GM12878 (cell line): ENCODE measurements at regions of chr10 and their contacts with region 1.

Region 1: DNA sequence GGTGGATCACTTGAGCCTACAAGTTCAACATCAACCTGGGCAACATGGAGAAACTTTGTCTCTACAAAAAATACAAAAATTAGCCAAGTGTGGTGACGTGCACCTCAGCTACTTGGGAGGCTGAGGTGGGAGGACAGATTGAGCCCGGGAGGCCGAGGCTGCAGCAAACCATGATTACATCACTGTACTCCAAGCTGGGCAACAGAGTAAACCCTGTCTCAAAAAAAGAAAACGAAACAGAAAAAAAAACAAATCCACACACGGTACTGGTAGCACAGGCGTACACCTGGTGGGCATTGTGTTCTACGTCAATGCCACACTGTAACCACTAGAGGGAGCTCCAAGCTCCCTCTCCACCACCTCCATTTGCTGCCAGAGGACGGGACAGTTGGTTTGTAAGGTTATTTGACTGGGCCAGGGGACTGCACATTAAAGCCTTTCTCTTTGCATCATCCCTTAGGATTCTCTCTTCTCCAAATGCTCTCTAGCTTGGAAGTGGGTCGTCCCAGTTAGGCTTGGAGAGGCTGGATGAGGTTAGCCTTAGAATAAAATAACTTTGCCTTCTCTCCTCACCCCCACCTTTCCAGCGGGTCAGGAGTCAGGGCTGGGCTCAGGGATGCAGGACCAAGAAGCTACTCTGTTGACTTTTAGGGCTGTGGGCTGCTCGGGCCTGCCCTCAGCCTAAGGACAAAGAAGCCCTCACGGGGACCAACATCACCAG is 130.8 kb downstream of the SORBS1 start:
- DNase-seq: peak; percentile 30
- ATAC-seq: peak; percentile 93
- H3K4me3 ChIP-seq: no peak overlapping the region
- H3K27ac ChIP-seq: no peak overlapping the region
- H3K4me1 ChIP-seq: peaks cover 7% of the 10 kb centered on the region
- H3K27me3 ChIP-seq: no peaks in the 10 kb centered on the region; a peak in 1 of 4 replicates
- CTCF ChIP-seq: peak; percentile 93 to 96 (median 93)
- EP300 ChIP-seq: no peak
- POLR2A ChIP-seq: no peak
- RAD21 ChIP-seq: peak; percentile 88

Region 2: DNA sequence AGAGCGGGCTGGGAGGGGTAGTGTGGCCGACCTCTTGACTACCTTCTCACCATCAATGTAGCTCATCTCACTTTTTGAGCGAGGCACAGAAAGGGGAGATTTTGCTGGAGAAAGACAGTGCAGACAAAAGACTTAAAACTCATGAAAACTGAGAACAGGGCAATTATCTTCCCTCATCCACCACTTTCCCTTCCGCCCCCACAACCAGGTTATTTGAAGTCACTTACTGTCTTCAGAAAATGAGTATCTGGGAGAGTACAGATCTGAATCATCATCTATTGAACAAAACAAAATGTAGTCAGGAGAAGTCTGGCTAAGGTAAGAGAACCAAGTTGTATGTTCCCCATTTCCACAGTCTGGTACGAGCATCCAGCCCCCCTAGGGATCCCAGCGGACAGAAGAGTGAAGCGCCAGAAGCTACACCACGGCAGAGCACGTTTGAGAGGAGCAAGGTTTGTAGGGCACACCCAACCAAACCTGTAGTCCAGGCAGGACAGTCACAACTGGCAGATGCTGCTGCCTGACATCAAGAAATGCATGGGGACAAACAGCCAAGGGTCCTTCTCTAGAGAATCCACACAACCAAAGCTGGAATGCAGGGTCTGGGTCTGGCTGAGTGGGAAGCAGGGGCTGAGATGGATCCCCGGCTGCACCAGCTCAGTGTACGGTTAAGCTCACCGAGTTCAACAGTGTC is 46.2 kb before region 1 on chr10:
- CTCF ChIA-PET with region 1: interaction called, 126 read pairs
- POLR2A ChIA-PET with region 1: no interaction called
- RAD21 ChIA-PET with region 1: interaction called, 3 read pairs
- SMC1A ChIA-PET with region 1: interaction called, 81 read pairs
- in situ Hi-C with region 1: no loop called
- intact Hi-C with region 1: no loop called
- DNase-seq: no peak
- ATAC-seq: peak; percentile 45
- H3K4me3 ChIP-seq: no peak overlapping the region
- H3K27ac ChIP-seq: no peak overlapping the region
- H3K4me1 ChIP-seq: peaks cover 20% of the 10 kb centered on the region
- H3K27me3 ChIP-seq: no peaks in the 10 kb centered on the region
- CTCF ChIP-seq: no peak
- EP300 ChIP-seq: no peak
- POLR2A ChIP-seq: no peak
- RAD21 ChIP-seq: no peak

Region 3: GRCh38 chr10:95400787-95401186 is 29.6 kb before region 1 on chr10:
- CTCF ChIA-PET with region 1: interaction called, 25 read pairs
- POLR2A ChIA-PET with region 1: interaction called, 5 read pairs
- RAD21 ChIA-PET with region 1: interaction called, 3 read pairs
- SMC1A ChIA-PET with region 1: interaction called, 6 read pairs
- in situ Hi-C with region 1: no loop called
- intact Hi-C with region 1: no loop called
- DNase-seq: no peak
- ATAC-seq: no peak
- H3K4me3 ChIP-seq: no peak overlapping the region
- H3K27ac ChIP-seq: no peak overlapping the region
- H3K4me1 ChIP-seq: peaks cover 13% of the 10 kb centered on the region
- H3K27me3 ChIP-seq: no peaks in the 10 kb centered on the region; a peak in 1 of 4 replicates
- CTCF ChIP-seq: no peak
- EP300 ChIP-seq: no peak
- POLR2A ChIP-seq: no peak
- RAD21 ChIP-seq: no peak

Region 4: DNA sequence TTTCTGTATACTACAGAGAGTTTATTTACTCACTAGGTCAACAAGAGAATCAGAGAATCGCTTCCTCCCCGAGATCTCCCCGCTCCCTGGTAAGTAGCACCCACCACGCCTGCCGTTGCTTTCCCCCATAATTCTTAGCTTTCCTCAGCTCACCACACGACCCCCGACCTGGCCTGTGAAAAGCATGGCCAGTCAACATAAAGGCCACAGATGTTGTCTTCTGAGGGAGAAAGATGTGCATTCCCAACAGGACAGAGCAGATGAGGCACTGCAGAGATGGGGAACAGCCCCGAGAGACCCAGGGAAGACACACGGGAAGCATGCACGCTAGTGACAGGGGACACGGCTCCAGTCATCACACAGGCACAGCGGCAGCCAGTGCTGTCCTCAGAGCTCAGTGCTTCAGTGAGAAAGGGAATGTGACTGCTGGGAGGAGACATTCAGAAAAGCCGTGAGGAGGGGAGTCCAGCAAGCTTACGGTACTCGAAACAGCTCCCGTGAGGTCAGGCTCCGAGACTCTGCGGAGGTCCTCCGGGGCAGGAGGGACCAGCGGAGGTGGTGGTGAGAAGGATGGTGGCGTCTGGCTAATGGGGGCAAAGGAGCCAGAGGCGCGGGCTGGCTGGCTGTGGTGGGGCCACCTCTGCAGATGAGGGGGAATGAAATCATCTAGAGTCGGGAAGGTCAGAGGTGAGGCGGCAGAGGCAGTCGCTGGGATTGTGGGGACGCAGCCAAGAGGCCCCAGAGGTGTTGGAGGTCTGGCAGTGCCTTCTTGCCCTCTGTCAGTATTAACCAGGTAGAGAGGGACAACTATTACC is 16.2 kb before region 1 on chr10:
- CTCF ChIA-PET with region 1: interaction called, 46 read pairs
- POLR2A ChIA-PET with region 1: interaction called, 4 read pairs
- RAD21 ChIA-PET with region 1: interaction called, 3 read pairs
- SMC1A ChIA-PET with region 1: interaction called, 12 read pairs
- in situ Hi-C with region 1: no loop called
- intact Hi-C with region 1: no loop called
- DNase-seq: no peak
- ATAC-seq: no peak
- H3K4me3 ChIP-seq: no peak overlapping the region
- H3K27ac ChIP-seq: no peak overlapping the region
- H3K4me1 ChIP-seq: no peaks in the 10 kb centered on the region
- H3K27me3 ChIP-seq: no peaks in the 10 kb centered on the region; a peak in 2 of 4 replicates
- CTCF ChIP-seq: no peak
- EP300 ChIP-seq: no peak
- POLR2A ChIP-seq: no peak
- RAD21 ChIP-seq: no peak

Region 5: DNA sequence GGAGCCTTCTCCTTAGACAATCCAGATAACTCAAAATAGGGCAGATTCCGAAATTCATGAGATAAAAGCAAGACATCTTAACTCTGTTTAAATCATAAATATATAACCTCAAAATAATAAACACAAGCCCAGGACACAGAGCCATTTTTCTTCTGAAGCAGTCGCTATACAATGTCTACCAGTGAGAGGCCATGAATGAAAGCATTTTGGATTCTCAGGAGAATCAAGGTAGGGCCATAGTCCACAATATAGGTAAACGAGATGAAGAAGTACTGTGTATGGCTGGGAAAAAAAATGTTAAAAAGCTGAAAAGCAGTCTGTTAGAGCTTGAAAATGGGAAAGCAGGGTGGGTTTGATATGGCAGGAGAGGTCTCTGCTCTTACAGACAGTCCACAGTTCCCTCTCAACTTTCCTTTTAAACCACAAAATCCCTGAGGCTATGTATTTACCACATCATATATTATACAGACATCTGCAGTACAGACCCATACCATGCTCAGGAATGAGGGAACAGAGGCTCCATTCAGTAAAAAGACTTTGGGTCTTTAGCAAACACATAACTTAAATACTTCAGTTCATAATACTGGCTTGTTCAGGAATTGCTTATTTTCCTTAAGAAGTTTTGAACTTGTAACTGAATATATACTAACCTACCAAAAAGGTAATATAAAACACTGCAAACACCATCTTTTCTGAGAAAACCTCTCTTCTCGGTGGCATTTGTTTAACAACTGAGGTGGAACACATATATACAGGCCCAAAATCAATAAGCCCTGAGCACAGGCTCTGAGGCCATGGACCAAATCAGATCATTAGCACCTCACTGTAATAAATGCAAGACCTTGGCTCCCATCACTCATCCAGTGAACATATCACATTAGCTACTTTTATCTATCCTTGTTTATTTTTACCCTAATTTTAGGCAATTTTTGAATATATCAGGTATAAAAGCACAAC is 21.5 kb after region 1 on chr10:
- CTCF ChIA-PET with region 1: interaction called, 147 read pairs
- POLR2A ChIA-PET with region 1: no interaction called
- RAD21 ChIA-PET with region 1: interaction called, 22 read pairs
- SMC1A ChIA-PET with region 1: interaction called, 70 read pairs
- in situ Hi-C with region 1: no loop called
- intact Hi-C with region 1: no loop called
- DNase-seq: no peak
- ATAC-seq: no peak
- H3K4me3 ChIP-seq: no peak overlapping the region
- H3K27ac ChIP-seq: no peak overlapping the region
- H3K4me1 ChIP-seq: no peaks in the 10 kb centered on the region
- H3K27me3 ChIP-seq: no peaks in the 10 kb centered on the region; a peak in 1 of 4 replicates
- CTCF ChIP-seq: no peak
- EP300 ChIP-seq: no peak
- POLR2A ChIP-seq: no peak
- RAD21 ChIP-seq: no peak

Region 6: GRCh38 chr10:95640891-95641315 is 210.5 kb after region 1 on chr10:
- CTCF ChIA-PET with region 1: no interaction called
- POLR2A ChIA-PET with region 1: no interaction called
- RAD21 ChIA-PET with region 1: no interaction called
- SMC1A ChIA-PET with region 1: no interaction called
- in situ Hi-C with region 1: no loop called
- intact Hi-C with region 1: no loop called
- DNase-seq: no peak
- ATAC-seq: no peak
- H3K4me3 ChIP-seq: no peak overlapping the region
- H3K27ac ChIP-seq: no peak overlapping the region
- H3K4me1 ChIP-seq: no peaks in the 10 kb centered on the region
- H3K27me3 ChIP-seq: no peaks in the 10 kb centered on the region
- CTCF ChIP-seq: no peak
- EP300 ChIP-seq: no peak
- POLR2A ChIP-seq: no peak
- RAD21 ChIP-seq: no peak